ENCODE measurements at regions of chr19 and their contacts with region 1.

Region 1: DNA sequence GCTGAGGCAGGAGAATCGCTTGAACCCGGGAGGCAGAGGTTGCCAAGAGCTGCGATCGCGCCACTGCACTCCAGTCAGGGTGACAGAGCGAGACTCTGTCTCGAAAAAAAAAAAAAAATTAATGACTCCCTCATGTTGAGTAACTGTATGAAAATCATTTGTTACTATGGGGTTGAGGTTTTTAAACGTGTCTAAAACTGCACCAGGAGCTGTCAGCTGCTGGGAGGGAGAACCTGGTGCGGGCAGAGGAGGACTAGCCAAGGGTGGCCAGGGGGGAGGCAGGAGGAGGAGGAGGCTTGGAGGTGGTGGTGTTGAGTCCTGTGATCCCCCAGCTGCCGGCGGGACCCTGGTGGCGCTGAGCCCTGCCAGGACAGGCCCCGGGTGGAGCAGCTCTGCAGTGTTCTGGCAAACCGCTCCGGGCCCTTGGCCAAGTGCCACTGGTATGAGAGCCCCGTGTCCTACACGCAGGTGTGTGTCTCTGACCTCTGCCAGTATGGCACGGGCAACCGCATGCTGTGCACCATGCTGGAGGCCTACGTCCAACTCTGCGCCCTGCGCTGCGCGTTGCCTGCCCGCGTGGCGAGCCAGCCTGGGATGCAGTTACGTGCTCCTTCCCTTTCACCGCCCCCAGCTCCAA is 17.1 kb upstream of the FXYD3 start:
- DNase-seq: peak; percentile 83
- H3K4me3 ChIP-seq: no peak overlapping the region
- H3K27ac ChIP-seq: peak overlapping the region; percentile 24
- H3K4me1 ChIP-seq: peaks cover 32% of the 10 kb centered on the region
- H3K27me3 ChIP-seq: no peaks in the 10 kb centered on the region
- CTCF ChIP-seq: no peak

Region 2: DNA sequence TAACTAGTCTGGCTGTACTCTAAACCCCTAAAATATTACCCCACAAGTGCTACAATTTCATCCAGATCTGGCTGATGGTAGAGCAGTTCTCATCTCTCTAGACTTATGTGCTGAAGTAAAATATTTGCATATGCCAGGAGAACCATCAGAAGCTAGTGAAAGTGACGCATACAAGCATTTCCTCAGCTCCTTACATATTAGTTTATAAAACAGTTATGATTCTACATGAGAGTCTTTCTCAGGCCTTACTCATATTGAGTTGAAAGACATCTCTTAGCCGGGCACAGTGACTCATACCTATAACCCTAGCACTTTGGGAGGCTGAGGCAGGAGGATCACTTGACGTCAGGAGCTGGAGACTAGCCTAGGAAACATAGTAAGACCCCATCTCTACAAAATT is 187.8 kb before region 1 on chr19:
- CTCF ChIA-PET with region 1: no interaction called
- dilution Hi-C with region 1: no loop called
- in situ Hi-C with region 1: no loop called
- intact Hi-C with region 1: no loop called
- DNase-seq: no peak
- H3K4me3 ChIP-seq: no peak overlapping the region
- H3K27ac ChIP-seq: no peak overlapping the region
- H3K4me1 ChIP-seq: no peaks in the 10 kb centered on the region
- H3K27me3 ChIP-seq: peaks cover 4% of the 10 kb centered on the region
- CTCF ChIP-seq: no peak

Region 3: DNA sequence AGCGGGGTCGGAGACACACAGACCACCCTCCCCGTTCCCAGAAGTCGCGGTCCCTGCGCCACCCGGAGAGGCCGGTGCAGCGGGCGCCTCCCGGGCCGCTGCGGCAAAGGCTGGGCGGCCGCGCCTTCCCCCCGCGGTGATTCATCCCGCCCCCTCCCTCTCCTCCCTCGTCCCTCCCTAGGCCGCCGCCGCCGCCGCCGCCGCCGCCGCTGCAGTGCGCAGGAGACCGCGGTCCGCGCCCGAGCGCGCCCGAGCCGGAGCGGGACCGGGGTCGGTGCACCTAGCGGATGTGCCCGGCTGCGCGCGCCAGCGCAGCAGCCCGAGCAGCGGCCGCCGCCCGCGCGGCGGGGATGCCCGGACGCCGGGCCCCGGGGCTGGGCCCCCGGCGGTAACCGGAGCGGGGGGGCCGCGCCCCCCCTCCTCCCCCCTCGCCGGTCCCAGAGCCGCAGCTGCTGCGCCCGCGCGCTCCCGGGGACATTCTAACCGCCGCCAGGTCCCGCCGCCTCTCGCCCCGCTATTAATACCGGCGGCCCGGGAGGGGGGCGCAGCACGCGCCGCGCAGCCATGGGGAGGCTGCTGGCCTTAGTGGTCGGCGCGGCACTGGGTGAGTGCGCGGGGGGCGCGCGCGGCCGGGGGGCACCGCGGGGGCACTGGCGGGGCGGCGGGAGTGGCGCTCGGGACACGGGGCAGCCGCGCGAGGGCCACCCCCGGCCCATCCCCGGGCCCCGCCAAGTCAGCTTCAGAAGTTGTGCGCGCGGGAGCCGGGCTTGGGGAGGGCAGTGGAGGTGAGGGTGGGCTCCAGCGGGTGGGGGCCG is 68.1 kb before region 1 on chr19 and contains the start of gene SCN1B:
- CTCF ChIA-PET with region 1: no interaction called
- dilution Hi-C with region 1: loop called (anchors 5 kb)
- in situ Hi-C with region 1: no loop called
- intact Hi-C with region 1: no loop called
- DNase-seq: peak; percentile 63
- H3K4me3 ChIP-seq: peak within 1 kb of the TSS; percentile 34 to 41 (median 35)
- H3K27ac ChIP-seq: no peak within 1 kb of the TSS
- H3K4me1 ChIP-seq: peaks cover 5% of the 10 kb centered on the region
- H3K27me3 ChIP-seq: peaks cover 4% of the 10 kb centered on the region
- CTCF ChIP-seq: no peak
- total RNA-seq, gene SCN1B: 0.71 to 0.83 TPM

Region 4: DNA sequence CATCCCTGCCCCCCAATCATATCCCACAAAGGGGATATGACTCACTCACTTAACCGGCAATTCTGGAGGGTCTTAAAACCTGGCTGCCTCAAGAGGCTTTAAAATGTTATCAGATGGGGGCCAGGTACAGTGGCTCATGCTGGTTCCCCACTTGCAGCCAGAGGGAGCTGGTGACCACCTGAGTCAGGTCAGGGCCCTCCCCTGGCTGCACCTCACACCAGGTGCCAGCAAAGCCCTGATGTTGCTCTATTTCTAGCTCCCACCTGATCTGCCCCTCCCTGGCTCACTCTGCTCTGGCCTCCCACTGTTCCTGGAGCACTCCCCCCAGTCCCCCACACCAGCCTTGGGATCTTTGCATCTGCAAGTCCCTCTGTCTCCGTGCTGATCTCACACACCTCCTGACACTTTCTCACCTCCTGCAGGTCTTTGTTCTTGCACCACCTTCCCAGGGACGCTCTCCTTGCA is 42.8 kb before region 1 on chr19:
- CTCF ChIA-PET with region 1: interaction called, 11 read pairs
- dilution Hi-C with region 1: no loop called
- in situ Hi-C with region 1: no loop called
- intact Hi-C with region 1: no loop called
- DNase-seq: no peak
- H3K4me3 ChIP-seq: no peak overlapping the region
- H3K27ac ChIP-seq: no peak overlapping the region
- H3K4me1 ChIP-seq: no peaks in the 10 kb centered on the region
- H3K27me3 ChIP-seq: no peaks in the 10 kb centered on the region
- CTCF ChIP-seq: peak; percentile 31 to 50

Region 5: DNA sequence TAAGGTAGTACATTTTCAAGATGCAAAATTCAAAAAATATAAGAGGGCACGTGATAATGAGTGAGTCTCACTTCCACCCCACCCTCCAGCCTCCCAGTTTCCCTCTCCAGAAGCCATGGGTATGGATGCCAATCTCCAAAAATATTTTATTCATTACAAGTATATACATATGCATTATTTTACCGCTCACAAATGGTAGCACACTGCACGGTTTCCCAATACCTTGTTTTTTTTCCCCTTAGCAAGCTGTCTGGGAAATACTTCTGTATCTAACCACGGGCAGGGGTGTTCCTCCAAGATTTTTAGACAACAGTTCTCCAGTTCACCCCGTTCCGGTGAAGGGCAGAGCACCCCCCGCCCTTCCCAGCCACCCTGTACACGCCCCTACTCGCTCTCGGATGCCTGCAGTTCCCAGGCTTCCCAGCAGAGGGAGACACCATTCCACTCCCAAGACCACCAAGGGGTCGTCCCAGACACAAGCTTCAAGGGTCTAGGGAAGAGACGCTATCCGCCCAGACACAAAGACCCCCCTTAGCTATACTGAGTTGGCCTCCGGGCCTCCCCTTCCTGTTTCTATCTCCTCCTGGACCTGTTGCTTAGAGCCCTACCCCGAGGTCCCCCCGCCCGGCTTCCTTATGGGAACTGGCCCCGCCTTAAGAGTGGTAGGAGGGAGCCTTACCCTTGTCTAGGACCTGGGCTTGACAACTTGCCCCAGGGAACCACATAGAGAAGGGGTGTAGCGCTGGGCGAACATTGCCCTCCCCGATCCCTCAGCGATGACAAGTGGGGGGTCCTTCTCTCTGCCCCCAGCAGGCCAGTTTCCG is 16.0 kb after region 1 on chr19:
- CTCF ChIA-PET with region 1: interaction called, 3 read pairs
- dilution Hi-C with region 1: no loop called
- in situ Hi-C with region 1: no loop called
- intact Hi-C with region 1: loop called (anchors 2 kb)
- DNase-seq: peak; percentile 68
- H3K4me3 ChIP-seq: peak overlapping the region; percentile 75 to 94 (median 89)
- H3K27ac ChIP-seq: peak overlapping the region; percentile 91
- H3K4me1 ChIP-seq: peaks cover 50% of the 10 kb centered on the region
- H3K27me3 ChIP-seq: no peaks in the 10 kb centered on the region
- CTCF ChIP-seq: peak; percentile 99 to 100

Region 6: DNA sequence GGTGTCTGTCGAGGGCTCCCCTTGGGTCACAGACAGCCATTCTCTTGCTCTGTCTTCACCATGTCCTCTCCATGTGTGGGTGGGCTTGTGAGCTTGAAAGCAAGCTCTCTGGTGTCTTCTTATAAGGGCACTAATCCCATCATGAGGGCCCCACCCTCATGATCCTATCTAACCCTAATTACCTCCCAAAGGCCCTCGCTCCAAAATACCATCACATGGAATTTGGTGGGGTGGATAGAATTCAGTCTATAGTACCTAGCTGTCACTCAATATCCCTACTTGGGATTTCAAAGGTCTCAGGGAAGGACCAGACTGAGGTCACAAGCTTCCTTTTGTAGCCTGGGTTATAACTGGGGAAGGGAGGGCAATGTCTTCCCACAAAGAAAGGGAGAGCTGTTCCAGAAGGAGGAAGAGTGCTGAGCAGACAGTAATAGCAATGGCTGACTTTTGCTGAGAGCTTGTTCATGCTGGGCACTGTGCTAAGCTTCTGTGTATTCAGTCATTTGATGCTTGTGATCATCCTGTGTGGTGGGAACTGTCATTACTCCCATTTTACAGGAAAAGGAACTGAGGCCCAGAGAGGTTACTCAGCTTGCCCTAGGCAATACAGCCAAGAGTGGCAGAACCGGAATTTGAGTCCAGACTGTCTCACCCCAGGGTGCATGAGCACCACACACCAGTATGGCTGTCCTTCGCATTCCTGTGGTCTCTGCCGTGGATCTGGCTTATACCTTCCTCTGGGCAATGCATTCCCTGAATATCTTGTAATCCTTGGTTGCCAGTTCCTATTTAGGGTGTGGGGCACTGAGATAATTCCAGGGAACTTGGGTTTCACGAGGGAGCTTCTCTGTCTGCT is 64.2 kb after region 1 on chr19:
- CTCF ChIA-PET with region 1: no interaction called
- dilution Hi-C with region 1: loop called (anchors 5 kb)
- in situ Hi-C with region 1: no loop called
- intact Hi-C with region 1: no loop called
- DNase-seq: peak; percentile 95
- H3K4me3 ChIP-seq: no peak overlapping the region
- H3K27ac ChIP-seq: peak overlapping the region; percentile 68
- H3K4me1 ChIP-seq: peaks cover 41% of the 10 kb centered on the region
- H3K27me3 ChIP-seq: no peaks in the 10 kb centered on the region
- CTCF ChIP-seq: no peak

Region 7: DNA sequence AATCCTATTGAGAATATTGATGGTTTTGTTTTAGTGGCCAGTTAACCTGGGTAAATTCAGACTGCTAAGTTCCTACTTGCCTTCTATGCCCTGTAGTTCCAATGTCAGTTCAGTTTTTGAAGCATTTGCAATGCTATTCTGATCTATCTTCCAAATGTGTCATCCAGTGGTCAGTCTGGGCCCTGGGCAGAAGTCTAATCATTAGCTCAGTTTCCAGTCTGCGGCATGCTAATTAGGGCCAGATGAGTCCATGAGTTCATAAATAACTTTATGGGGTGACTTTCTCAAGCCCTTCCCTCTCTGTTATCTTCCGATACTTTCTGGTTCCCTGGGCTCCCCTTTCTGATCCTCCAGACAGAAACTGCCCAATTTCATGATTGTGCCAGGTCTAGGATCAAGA is 97.3 kb after region 1 on chr19:
- CTCF ChIA-PET with region 1: no interaction called
- dilution Hi-C with region 1: loop called (anchors 5 kb)
- in situ Hi-C with region 1: no loop called
- intact Hi-C with region 1: no loop called
- DNase-seq: no peak
- H3K4me3 ChIP-seq: no peak overlapping the region
- H3K27ac ChIP-seq: no peak overlapping the region
- H3K4me1 ChIP-seq: no peaks in the 10 kb centered on the region
- H3K27me3 ChIP-seq: peaks cover 3% of the 10 kb centered on the region
- CTCF ChIP-seq: no peak

Region 8: GRCh38 chr19:35224681-35225571 is 126.4 kb after region 1 on chr19:
- CTCF ChIA-PET with region 1: no interaction called
- dilution Hi-C with region 1: loop called (anchors 5 kb)
- in situ Hi-C with region 1: no loop called
- intact Hi-C with region 1: no loop called
- DNase-seq: no peak
- H3K4me3 ChIP-seq: no peak overlapping the region
- H3K27ac ChIP-seq: no peak overlapping the region
- H3K4me1 ChIP-seq: no peaks in the 10 kb centered on the region
- H3K27me3 ChIP-seq: no peaks in the 10 kb centered on the region
- CTCF ChIP-seq: no peak